Gastrocnemius medialis (tissue), 4 donors: ENCODE measurements at regions of chr14 and their contacts with region 1.

Region 1: DNA sequence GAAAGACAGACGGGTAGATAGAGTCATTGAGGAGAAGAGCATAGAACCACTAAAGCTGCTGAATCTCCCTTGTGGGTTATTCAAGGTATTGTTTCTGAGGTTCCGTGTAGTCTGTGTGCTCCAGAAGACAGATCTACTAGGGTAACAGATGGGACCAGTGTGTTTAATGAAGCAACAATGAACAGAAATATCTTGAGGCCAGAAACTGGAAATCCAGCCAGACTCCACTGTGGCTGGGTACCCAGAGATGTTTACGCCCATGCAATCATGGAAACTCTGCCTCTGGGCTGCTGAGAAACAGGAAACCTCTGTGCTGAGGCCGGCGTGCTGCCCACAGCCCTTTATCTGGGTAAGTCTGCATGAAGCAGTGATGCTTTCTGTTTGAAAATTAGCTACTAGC is 8.3 kb downstream of the PROX2 start:
- DNase-seq: no peak
- ATAC-seq: no peak
- H3K4me3 ChIP-seq: no peak overlapping the region
- H3K27ac ChIP-seq: no peak overlapping the region
- H3K4me1 ChIP-seq: no peaks in the 10 kb centered on the region
- H3K27me3 ChIP-seq: no peaks in the 10 kb centered on the region
- CTCF ChIP-seq: no peak
- POLR2A ChIP-seq: no peak

Region 2: DNA sequence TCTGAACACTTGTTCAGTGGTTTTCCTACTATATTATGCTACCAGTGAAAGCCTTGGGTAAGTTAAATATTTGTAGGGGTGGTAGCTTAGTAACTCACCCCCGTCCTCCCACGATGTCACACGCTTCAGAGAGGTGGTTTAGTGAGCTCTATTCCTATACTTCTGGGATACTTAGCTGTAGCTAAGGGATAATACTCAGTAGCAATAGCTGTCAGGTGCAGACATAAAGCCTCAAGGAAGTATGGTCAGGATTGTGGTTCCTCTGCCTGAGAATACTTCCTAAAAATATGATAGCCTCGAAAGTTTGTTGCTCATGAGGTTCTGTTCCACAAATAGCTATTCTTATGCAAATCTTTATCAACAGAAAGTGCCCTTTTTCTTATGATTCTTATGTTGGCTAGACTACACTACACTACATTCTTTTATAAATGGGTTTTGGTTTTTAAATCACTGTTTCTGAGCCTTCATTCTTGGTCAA is 26.0 kb after region 1 on chr14:
- in situ Hi-C with region 1: loop called in 1 of 4 experiments (anchors 5 kb)
- intact Hi-C with region 1: loop called (anchors 2 kb)
- DNase-seq: no peak
- ATAC-seq: no peak
- H3K4me3 ChIP-seq: no peak overlapping the region
- H3K27ac ChIP-seq: no peak overlapping the region
- H3K4me1 ChIP-seq: peaks cover 0 to 3% of the 10 kb centered on the region in 2 donors
- H3K27me3 ChIP-seq: no peaks in the 10 kb centered on the region
- CTCF ChIP-seq: no peak
- POLR2A ChIP-seq: no peak

Region 3: GRCh38 chr14:75002392-75003249 is 134.9 kb after region 1 on chr14 and contains the start of gene EIF2B2:
- in situ Hi-C with region 1: no loop called
- intact Hi-C with region 1: no loop called
- DNase-seq: peak; percentile 97 to 98
- ATAC-seq: peak; percentile 98 to 99
- H3K4me3 ChIP-seq: peak within 1 kb of the TSS; percentile 75 to 95 (median 89)
- H3K27ac ChIP-seq: peak within 1 kb of the TSS; percentile 82 to 94 (median 87)
- H3K4me1 ChIP-seq: peaks cover 12 to 14% of the 10 kb centered on the region in 2 donors
- H3K27me3 ChIP-seq: no peaks in the 10 kb centered on the region
- CTCF ChIP-seq: peak in 4 of 5 experiments; percentile 27 to 37 (median 33)
- POLR2A ChIP-seq: peak; percentile 67 to 80
- total RNA-seq, gene EIF2B2: 42.7 to 79.0 (median 69.9) TPM